ENCODE measurements at regions of chr1 and their contacts with region 1.

Region 1: DNA sequence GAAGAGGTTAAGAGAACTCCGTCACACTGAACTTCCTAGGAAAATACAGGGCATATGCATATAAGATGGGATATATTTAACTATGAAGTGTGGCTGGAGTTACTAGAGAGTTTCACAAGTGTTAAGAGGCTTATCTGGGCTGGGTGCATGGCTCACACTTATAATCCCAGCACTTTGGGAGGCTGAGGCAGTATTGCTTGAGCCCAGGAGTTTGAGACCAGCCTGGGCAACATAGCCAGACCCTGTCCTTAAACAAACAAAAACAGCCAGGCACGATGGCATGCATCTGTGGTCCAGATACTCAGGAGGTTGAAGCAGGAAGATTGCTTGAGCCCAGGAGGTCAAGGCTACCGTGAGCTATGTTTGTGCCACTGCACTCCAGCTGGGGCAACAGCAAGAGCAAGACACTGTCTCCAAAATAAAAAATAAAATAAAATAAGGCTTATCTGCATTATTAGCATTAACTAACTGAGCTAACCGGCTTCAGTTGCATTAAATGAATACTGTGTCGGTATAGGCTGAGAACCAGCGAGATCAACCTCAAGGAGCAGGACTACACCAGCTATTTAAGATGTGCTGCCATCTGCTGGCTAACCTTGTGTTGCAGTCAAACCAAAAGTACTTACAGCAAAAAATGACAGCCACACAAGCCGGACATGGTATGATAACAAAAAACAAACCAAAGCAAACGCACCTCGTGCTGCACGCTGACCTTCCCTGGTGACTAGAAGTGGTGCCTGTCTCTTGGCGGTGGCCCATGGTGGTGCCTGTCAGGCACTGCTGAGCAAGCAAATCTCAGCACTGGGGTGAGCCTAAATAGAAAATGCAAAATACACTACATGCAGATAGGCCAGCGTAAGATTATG is 19.7 kb upstream of the RBBP5 start:
- DNase-seq: peak; percentile 85
- H3K4me3 ChIP-seq: no peak overlapping the region
- H3K27ac ChIP-seq: no peak overlapping the region
- H3K4me1 ChIP-seq: peaks cover 4% of the 10 kb centered on the region
- CTCF ChIP-seq: peak; percentile 94

Region 2: DNA sequence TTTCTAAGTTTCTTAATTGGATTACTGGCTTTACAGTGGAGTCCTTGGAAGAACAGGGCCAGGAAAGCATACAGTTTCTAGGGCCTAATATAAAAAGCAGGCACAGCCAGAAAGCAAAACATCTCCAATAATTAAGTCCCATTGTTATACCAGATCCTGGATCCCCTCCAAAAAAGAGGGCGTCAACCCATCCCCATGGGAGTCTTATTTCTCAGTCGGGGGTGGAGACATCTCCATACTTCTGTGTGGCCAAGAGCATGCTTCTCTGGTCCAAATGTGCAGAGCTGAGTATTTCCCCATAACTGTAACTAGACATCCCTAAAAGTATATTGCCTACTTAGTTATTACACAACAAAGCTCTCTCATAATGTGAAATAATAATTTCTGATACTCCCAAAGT is 1172.7 kb before region 1 on chr1:
- CTCF ChIA-PET with region 1: no interaction called
- POLR2A ChIA-PET with region 1: no interaction called
- intact Hi-C with region 1: loop called (anchors 10 kb)
- DNase-seq: no peak
- H3K4me3 ChIP-seq: no peak overlapping the region
- H3K27ac ChIP-seq: no peak overlapping the region
- H3K4me1 ChIP-seq: no peaks in the 10 kb centered on the region
- CTCF ChIP-seq: no peak

Region 3: GRCh38 chr1:204975570-204976235 is 165.8 kb before region 1 on chr1:
- CTCF ChIA-PET with region 1: no interaction called
- POLR2A ChIA-PET with region 1: no interaction called
- intact Hi-C with region 1: loop called (anchors 1 kb)
- DNase-seq: peak; percentile 51
- H3K4me3 ChIP-seq: no peak overlapping the region
- H3K27ac ChIP-seq: no peak overlapping the region
- H3K4me1 ChIP-seq: no peaks in the 10 kb centered on the region
- CTCF ChIP-seq: peak; percentile 84

Region 4: GRCh38 chr1:204989266-204990058 is 152.0 kb before region 1 on chr1:
- CTCF ChIA-PET with region 1: no interaction called
- POLR2A ChIA-PET with region 1: no interaction called
- intact Hi-C with region 1: loop called (anchors 1 kb)
- DNase-seq: peak; percentile 65
- H3K4me3 ChIP-seq: no peak overlapping the region
- H3K27ac ChIP-seq: no peak overlapping the region
- H3K4me1 ChIP-seq: no peaks in the 10 kb centered on the region
- CTCF ChIP-seq: peak; percentile 91

Measured in OCI-LY7 (cell line).